HepG2 (cell line): ENCODE measurements at regions of chr12 and their contacts with region 1.

Region 1: DNA sequence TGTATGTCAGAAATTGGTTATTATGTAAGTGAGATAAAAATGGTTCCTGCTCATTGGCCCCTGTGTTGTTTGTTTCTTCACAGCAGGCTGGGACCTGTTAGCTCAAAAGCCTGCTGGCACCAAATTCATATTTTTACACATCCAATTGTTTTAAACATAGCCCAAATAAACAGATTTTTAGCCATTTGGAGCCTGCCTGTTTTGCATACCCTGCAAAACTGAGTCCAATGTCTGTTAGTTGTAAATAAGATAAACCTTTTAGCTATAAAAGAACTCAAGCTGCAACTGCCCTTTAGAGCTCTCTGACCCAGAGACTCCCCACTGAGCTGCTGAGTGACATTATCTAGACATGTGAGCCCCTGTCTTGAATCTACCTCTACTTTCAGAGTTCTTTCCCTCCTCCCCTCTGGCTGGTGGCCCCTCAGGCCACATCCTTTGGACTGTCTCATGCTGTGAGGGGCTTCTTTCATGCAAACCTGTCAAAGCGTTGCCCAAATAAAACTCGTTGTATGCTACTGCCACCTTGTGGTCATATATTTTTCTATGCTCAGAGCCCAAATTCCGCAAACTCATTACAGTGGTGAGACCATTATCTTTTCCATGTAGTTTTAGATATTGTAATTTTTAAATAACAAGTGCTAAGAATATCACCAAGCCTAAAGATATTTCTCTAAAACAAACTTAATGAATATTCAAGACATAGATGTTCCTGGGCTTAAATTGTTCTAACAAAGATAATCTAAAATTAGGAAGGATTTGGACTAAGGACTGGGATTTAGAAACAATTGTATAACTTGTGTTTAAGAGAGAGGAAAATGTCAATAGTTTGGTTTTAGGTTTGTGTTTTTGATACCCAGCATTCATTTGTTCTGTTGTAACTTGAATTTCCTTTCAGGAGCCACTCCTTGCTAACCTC is 337.9 kb downstream of the AACS start:
- DNase-seq: peak; percentile 34
- ATAC-seq: peak; percentile 65
- H3K4me3 ChIP-seq: no peak overlapping the region
- H3K27ac ChIP-seq: no peak overlapping the region
- H3K4me1 ChIP-seq: no peaks in the 10 kb centered on the region
- H3K27me3 ChIP-seq: no peaks in the 10 kb centered on the region
- CTCF ChIP-seq: peak; percentile 80
- EP300 ChIP-seq: no peak
- POLR2A ChIP-seq: no peak
- RAD21 ChIP-seq: peak; percentile 85

Region 2: GRCh38 chr12:125330645-125331341 is 72.3 kb before region 1 on chr12:
- CTCF ChIA-PET with region 1: interaction called, 28 read pairs
- POLR2A ChIA-PET with region 1: no interaction called
- in situ Hi-C with region 1: loop called (anchors 5 kb)
- intact Hi-C with region 1: loop called (anchors 1 kb)
- DNase-seq: peak; percentile 5
- ATAC-seq: peak; percentile 99
- H3K4me3 ChIP-seq: peak overlapping the region in 2 of 3 experiments; percentile 10 to 63; a peak in 2 of 6 replicates
- H3K27ac ChIP-seq: no peak overlapping the region
- H3K4me1 ChIP-seq: no peaks in the 10 kb centered on the region
- H3K27me3 ChIP-seq: peaks cover 2 to 11% of the 10 kb centered on the region in 2 experiments; a peak in 2 of 5 replicates
- CTCF ChIP-seq: peak; percentile 93
- EP300 ChIP-seq: no peak
- POLR2A ChIP-seq: no peak
- RAD21 ChIP-seq: peak; percentile 92

Region 3: GRCh38 chr12:125346362-125346761 is 56.8 kb before region 1 on chr12:
- CTCF ChIA-PET with region 1: interaction called, 4 read pairs
- POLR2A ChIA-PET with region 1: no interaction called
- in situ Hi-C with region 1: no loop called
- intact Hi-C with region 1: loop called (anchors 1 kb)
- DNase-seq: no peak
- ATAC-seq: no peak
- H3K4me3 ChIP-seq: no peak overlapping the region
- H3K27ac ChIP-seq: no peak overlapping the region
- H3K4me1 ChIP-seq: no peaks in the 10 kb centered on the region
- H3K27me3 ChIP-seq: peaks cover 0 to 9% of the 10 kb centered on the region in 2 experiments; a peak in 2 of 5 replicates
- CTCF ChIP-seq: peak; percentile 49
- EP300 ChIP-seq: no peak
- POLR2A ChIP-seq: no peak
- RAD21 ChIP-seq: no peak

Region 4: DNA sequence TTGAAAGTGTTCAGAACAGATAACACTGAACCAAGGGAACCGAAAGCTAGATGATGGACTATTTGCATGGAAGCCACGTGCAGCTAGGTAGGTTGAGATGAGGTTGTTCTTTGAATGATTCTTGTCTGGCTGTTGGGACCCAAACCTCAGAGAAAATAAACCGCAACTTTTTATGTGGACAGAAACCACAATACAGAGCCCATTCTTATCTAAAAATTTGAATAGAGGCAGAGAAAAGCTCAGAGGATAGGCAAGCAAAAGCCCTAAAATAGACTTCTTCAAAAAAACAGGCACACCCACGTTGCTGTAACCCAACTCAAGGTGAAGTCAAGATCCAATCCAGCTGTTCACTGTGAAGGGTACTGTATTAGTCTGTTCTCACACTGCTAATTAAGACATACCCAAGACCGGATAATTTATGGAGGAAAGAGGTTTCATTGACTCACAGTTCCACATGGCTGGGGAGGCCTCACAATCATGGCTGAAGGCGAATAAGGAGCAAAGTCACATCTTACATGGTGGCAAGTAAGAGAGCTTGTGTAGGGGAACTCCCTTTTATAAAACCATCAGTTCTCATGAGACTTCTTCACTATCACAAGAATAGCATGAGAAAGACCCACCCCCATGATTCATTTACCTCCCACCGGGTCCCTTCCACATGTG is 15.9 kb after region 1 on chr12:
- CTCF ChIA-PET with region 1: no interaction called
- POLR2A ChIA-PET with region 1: no interaction called
- in situ Hi-C with region 1: no loop called
- intact Hi-C with region 1: no loop called
- DNase-seq: no peak
- ATAC-seq: no peak
- H3K4me3 ChIP-seq: no peak overlapping the region
- H3K27ac ChIP-seq: no peak overlapping the region
- H3K4me1 ChIP-seq: no peaks in the 10 kb centered on the region
- H3K27me3 ChIP-seq: peaks cover 1 to 3% of the 10 kb centered on the region in 2 experiments; a peak in 1 of 5 replicates
- CTCF ChIP-seq: no peak
- EP300 ChIP-seq: no peak
- POLR2A ChIP-seq: no peak
- RAD21 ChIP-seq: no peak

Region 5: DNA sequence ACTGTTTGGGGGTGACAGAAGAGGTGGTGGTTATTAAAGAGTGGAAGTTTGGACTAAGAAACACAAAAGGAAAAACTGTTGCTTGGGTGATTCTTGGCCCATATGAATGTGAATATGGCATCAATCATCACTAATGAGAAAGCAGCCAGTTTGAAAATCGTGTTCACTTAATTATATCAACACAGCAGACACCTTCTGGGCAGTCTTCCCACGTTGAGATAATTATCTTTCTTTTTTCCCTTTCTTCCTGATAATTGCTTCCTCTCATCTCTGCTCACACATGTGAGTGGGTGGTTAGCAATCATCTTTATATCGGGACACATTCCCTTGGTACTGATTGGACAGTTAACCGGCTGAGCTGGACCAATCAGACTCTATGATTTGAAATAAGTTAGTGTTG is 201.8 kb after region 1 on chr12:
- CTCF ChIA-PET with region 1: no interaction called
- POLR2A ChIA-PET with region 1: no interaction called
- in situ Hi-C with region 1: no loop called
- intact Hi-C with region 1: no loop called
- DNase-seq: no peak
- ATAC-seq: no peak
- H3K4me3 ChIP-seq: no peak overlapping the region
- H3K27ac ChIP-seq: no peak overlapping the region
- H3K4me1 ChIP-seq: no peaks in the 10 kb centered on the region
- H3K27me3 ChIP-seq: no peaks in the 10 kb centered on the region
- CTCF ChIP-seq: no peak
- EP300 ChIP-seq: no peak
- POLR2A ChIP-seq: no peak
- RAD21 ChIP-seq: no peak